ENCODE measurements at regions of chr19 and their contacts with region 1.

Region 1: DNA sequence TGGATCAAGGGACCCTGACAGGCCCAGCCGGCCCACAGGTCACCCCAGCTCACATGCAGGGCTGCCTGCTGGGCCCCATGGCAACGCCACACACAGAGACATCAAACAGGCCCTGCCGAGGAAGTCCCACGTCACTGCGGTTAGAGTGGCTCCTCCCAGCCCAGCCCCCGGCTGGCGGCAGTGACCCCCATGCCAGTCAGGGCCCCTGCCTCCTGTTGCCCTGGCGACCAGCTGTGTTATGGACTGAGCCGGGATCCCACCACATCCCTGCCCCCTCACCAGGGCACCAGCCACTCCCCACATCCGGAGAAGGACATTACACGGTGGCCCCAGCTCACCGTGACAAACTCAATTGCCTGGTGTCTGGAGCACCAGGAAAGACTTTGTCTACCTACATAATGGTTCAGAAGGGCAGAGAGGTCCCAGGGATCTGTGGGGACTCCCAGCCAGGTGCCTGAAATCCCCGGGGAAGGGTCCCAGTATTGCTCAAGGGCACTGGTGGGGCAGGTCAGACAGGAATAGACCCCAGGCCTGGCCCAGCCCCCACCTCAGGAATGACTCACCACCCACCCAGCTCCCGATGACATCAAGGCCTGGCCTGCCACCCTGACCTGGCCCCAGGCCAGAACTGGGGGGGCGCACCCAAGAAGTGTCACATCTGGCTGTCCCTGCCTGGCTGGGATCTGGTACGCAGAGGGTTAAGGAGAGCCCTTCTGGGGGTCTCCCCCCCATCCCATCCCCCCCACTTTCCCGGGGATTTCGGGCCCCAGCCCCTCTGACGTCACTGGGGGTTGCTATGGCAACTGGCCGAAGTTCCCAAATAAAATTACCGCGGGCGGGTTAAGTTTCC is 30.2 kb upstream of the NANOS3 start:
- DNase-seq: peak; percentile 69 to 87
- ATAC-seq: peak; percentile 38 to 54
- H3K4me3 ChIP-seq: peak overlapping the region; percentile 68 to 78 (median 70)
- H3K27ac ChIP-seq: peak overlapping the region; percentile 96 to 100 (median 98)
- H3K4me1 ChIP-seq: peaks cover 49 to 54% of the 10 kb centered on the region in 2 donors
- H3K27me3 ChIP-seq: no peaks in the 10 kb centered on the region
- CTCF ChIP-seq: no peak
- POLR2A ChIP-seq: peak; percentile 7 to 22

Region 2: DNA sequence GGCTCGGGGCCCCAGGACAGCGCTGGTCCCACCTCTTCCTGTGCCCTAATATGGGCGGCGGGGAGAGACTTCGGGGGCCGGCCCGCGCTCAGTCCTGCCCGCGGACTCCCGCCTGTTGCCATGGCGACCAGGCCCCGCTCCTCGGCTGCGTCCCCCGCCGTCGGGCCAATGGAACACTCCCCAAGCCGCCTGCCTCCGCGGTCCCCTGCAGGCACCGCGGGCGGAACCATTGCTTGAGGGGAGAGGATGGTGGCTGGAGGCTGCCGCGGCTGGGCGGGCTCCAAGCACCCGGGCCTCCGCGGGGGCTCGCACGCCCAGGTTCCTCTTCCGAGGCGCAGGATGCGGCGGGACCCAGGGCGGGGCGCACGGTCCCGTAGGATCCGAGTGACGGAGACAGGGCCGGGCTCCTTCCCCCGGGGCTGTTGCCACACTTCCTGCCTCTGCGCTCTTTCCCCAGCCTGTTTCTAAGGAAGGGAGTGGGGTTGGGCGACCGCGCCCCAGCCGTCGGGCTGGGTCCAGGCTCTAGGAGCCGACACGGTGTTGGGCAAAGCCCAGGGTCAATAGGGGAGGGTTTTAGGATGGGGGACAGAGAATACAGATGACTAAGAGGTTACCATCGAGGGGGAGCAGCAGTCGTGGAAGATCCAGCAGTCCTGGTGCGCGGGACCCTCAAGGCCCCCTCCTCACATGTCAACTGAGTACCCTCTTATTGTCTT is 1056.7 kb before region 1 on chr19:
- in situ Hi-C with region 1: no loop called
- intact Hi-C with region 1: loop called (anchors 5 kb)
- DNase-seq: peak; percentile 89 to 90
- ATAC-seq: peak; percentile 32 to 34
- H3K4me3 ChIP-seq: peak overlapping the region; percentile 91 to 98 (median 94)
- H3K27ac ChIP-seq: peak overlapping the region; percentile 99 to 100 (median 100)
- H3K4me1 ChIP-seq: peaks cover 45 to 46% of the 10 kb centered on the region in 2 donors
- H3K27me3 ChIP-seq: no peaks in the 10 kb centered on the region
- CTCF ChIP-seq: no peak
- POLR2A ChIP-seq: peak; percentile 88 to 93

Region 3: GRCh38 chr19:12945479-12946091 is 901.2 kb before region 1 on chr19 and contains the start of gene RAD23A:
- in situ Hi-C with region 1: no loop called
- intact Hi-C with region 1: loop called (anchors 10 kb)
- DNase-seq: peak; percentile 93 to 97
- ATAC-seq: peak; percentile 90 to 92
- H3K4me3 ChIP-seq: peak within 1 kb of the TSS; percentile 65 to 94 (median 85)
- H3K27ac ChIP-seq: peak within 1 kb of the TSS; percentile 96 to 99 (median 98)
- H3K4me1 ChIP-seq: peaks cover 30 to 35% of the 10 kb centered on the region in 2 donors
- H3K27me3 ChIP-seq: no peaks in the 10 kb centered on the region
- CTCF ChIP-seq: peak in 1 of 5 experiments; percentile 30
- POLR2A ChIP-seq: peak; percentile 96 to 97
- total RNA-seq, gene RAD23A: 618 to 949 (median 780) TPM

Region 4: DNA sequence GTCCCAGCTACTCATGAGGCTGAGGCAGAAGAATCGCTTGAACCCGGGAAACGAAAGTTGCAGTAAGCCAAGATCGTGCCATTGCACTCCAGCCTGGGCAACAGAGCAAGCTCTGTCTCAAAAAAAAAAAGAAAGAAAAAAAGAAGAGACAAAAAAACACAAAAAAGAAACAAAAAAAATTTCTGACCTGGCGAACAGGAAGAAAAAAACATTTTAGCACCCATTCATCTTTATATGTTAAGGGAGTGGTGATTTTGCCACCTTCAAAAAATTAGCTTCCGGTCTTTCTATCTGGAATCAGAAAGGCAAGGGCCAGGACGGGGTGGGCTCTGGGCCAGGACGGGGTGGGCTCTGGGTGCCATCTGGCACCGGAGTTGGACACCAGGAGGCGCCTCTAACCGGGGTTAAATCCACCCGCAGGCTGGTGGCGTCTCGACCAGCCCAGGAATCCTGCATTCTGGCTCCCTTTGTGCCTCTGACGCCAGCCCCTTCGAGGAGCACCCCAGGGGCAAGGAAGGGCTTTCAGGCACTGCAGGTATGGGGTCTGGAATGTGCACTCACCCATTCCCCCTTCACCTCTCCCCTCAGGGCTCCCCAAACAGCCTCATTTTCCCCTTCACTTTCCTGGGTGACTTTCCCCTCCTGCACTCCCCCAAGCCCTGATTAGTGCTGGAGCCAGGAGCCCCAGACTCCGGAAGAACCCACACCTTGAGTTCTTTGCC is 61.9 kb before region 1 on chr19:
- in situ Hi-C with region 1: loop called in 1 of 4 experiments (anchors 10 kb)
- intact Hi-C with region 1: no loop called
- DNase-seq: peak; percentile 36 to 62
- ATAC-seq: peak; percentile 72 to 74
- H3K4me3 ChIP-seq: peak overlapping the region; percentile 10 to 39 (median 33)
- H3K27ac ChIP-seq: no peak overlapping the region
- H3K4me1 ChIP-seq: peaks cover 12 to 14% of the 10 kb centered on the region in 2 donors
- H3K27me3 ChIP-seq: peaks cover 0 to 19% (median 8%) of the 10 kb centered on the region in 3 donors
- CTCF ChIP-seq: peak; percentile 56 to 80 (median 74)
- POLR2A ChIP-seq: no peak

Region 5: GRCh38 chr19:13833330-13834243 is 13.2 kb before region 1 on chr19:
- in situ Hi-C with region 1: no loop called
- intact Hi-C with region 1: loop called (anchors 2 kb)
- DNase-seq: peak; percentile 91 to 96
- ATAC-seq: peak; percentile 75 to 81
- H3K4me3 ChIP-seq: peak overlapping the region; percentile 14 to 40 (median 19)
- H3K27ac ChIP-seq: peak overlapping the region; percentile 96 to 100 (median 98)
- H3K4me1 ChIP-seq: peaks cover 43 to 55% of the 10 kb centered on the region in 2 donors
- H3K27me3 ChIP-seq: no peaks in the 10 kb centered on the region
- CTCF ChIP-seq: peak; percentile 39 to 62 (median 45)
- POLR2A ChIP-seq: peak in 1 of 2 donors; percentile 41

Region 6: DNA sequence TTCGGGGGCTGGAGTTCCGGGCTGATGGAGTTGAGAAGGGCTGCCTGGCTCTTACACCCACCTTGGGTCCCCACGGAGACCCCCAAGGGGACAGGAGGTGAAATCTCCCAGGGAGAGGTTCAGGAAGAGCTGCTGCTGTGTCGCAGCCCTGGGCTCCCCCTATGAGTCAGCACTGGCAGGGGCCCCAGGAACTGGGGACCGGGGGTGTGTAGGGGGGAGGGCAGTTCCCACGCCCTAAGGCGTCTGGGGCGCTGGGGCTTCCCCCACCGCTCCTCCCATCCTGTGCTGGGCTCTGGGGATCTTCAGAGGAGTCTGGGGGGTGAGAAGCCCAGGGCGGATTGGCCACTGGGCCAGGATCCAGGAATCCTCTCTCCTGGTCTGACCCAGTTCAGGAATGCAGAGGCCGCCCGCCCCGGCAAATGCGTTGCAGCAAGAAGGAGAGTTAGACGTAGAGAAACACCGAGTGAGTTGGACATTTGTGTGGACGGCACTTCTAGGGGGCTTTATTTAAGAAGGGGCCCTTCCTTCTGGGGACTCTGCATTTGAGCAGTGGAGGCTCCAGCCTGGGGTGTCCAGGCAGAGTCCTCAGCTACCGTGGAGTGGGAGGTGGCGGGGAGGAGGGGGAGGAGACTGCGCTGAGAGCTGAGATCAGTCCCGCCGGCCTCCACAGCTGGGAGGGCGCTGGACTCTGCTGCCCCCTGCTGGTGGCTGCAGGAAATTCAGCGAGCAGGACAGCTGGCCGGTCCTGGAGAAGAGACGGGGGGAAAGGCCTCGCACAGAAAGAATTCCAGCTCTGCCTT is 15.2 kb after region 1 on chr19:
- in situ Hi-C with region 1: no loop called
- intact Hi-C with region 1: no loop called
- DNase-seq: peak; percentile 87 to 91
- ATAC-seq: peak; percentile 95 to 97
- H3K4me3 ChIP-seq: peak overlapping the region; percentile 47 to 69 (median 62)
- H3K27ac ChIP-seq: peak overlapping the region; percentile 80 to 87 (median 86)
- H3K4me1 ChIP-seq: peaks cover 7 to 18% of the 10 kb centered on the region in 2 donors
- H3K27me3 ChIP-seq: peaks cover 5 to 9% (median 9%) of the 10 kb centered on the region in 3 donors
- CTCF ChIP-seq: peak; percentile 97 to 99 (median 98)
- POLR2A ChIP-seq: peak; percentile 15 to 44

Region 7: DNA sequence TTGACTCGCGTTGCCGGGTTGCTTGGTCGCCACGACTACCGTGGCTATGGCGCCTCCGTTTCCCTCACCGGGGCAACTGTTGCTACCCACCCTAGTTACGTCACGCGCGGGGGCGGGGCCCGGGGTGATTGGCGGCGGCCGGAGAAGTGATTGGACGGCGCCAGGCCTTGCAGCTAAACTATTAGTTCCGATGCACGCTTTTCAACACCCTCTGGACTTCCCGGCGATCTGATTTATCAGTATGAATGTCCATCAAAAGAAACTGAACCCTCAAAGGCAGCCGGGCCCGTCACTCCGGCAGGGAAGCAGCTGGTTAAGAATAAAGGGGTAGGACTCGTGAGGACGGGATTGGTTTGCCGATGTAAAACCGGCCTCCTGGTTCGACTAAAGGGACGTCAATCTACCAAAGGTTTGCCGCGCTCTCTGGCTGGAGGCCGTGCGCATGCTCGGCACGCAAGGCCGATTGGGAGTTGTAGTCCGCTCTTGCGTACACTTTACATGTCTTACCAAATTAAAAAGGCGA is 159.5 kb after region 1 on chr19 and contains the start of gene RFX1:
- in situ Hi-C with region 1: no loop called
- intact Hi-C with region 1: loop called (anchors 2 kb)
- DNase-seq: peak; percentile 99 to 100
- ATAC-seq: peak; percentile 82 to 85
- H3K4me3 ChIP-seq: peak within 1 kb of the TSS; percentile 84 to 97 (median 92)
- H3K27ac ChIP-seq: peak within 1 kb of the TSS; percentile 96 to 100 (median 99)
- H3K4me1 ChIP-seq: peaks cover 34 to 45% of the 10 kb centered on the region in 2 donors
- H3K27me3 ChIP-seq: no peaks in the 10 kb centered on the region
- CTCF ChIP-seq: peak in 1 of 5 experiments; percentile 41
- POLR2A ChIP-seq: no peak
- total RNA-seq, gene RFX1: 2.7 to 7.2 (median 4.4) TPM

Measured in gastrocnemius medialis (tissue), 4 donors.